Caco-2 (cell line): ENCODE measurements at regions of chr19 and their contacts with region 1.

Region 1: GRCh38 chr19:17390665-17391370 is 3.2 kb downstream of the CCDC194 start:
- DNase-seq: peak; percentile 93 to 95
- H3K4me3 ChIP-seq: peak overlapping the region; percentile 48
- H3K4me3 Mint-ChIP-seq: peak overlapping the region; percentile 78
- H3K27ac Mint-ChIP-seq: peak overlapping the region; percentile 32
- H3K4me1 ChIP-seq: 0 out of 2 replicates have a peak, but pooled peaks cover 5% of the 10 kb centered on the region
- H3K4me1 Mint-ChIP-seq: peaks cover 6% of the 10 kb centered on the region
- H3K27me3 ChIP-seq: no peaks in the 10 kb centered on the region
- H3K27me3 Mint-ChIP-seq: peaks cover 3% of the 10 kb centered on the region
- CTCF ChIP-seq: peak; percentile 62 to 68

Region 2: DNA sequence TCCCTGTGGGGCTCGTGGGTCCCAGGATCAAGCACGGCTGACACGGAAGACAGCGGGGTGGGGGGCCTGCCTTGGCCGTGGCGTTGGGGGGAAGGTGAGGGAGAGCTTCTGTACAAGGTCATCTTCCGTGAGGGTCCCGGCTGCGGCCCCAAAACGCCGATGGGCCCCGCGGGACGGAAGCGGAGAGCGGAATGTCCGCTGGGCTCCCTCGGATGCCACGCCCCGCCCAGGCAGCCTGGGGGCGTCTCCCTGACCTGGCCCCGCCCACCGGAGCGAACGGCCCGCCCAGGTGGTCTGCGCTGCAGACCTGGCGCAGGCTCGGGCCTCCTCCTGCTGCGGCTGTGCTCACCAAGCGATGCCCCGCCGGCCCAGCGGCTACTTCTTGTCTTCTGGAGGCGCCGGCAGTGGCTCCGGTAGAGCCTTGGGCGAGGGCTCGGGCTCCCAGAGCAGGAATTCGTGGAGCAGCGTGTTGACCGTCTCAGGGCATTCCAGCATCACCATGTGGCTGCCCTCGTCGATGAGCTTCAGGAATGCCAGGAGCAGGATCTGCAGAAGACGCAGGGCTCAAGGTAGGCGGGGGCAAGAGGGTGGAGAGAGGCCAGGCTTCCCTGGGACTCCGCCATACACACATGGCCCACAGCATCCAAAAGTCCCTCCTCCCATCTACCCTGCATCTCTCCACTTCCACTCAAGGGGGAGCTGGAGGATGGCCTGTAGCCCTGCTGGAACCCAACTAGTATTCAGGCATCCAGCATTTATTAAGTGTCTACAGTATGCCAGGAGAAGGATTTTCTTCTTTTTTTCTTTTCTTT is 98.3 kb before region 1 on chr19:
- CTCF ChIA-PET with region 1: interaction called, 3 read pairs
- POLR2A ChIA-PET with region 1: no interaction called
- intact Hi-C with region 1: loop called (anchors 2 kb)
- DNase-seq: peak; percentile 91 to 92
- H3K4me3 ChIP-seq: peak overlapping the region; percentile 70
- H3K4me3 Mint-ChIP-seq: peak overlapping the region; percentile 83
- H3K27ac Mint-ChIP-seq: peak overlapping the region; percentile 84
- H3K4me1 ChIP-seq: no peaks in the 10 kb centered on the region
- H3K4me1 Mint-ChIP-seq: no peaks in the 10 kb centered on the region
- H3K27me3 ChIP-seq: no peaks in the 10 kb centered on the region
- H3K27me3 Mint-ChIP-seq: no peaks in the 10 kb centered on the region
- CTCF ChIP-seq: peak; percentile 68 to 77

Region 3: GRCh38 chr19:17346109-17346671 is 44.6 kb before region 1 on chr19:
- CTCF ChIA-PET with region 1: no interaction called
- POLR2A ChIA-PET with region 1: no interaction called
- intact Hi-C with region 1: loop called (anchors 1 kb)
- DNase-seq: peak; percentile 65 to 83
- H3K4me3 ChIP-seq: no peak overlapping the region
- H3K4me3 Mint-ChIP-seq: no peak overlapping the region
- H3K27ac Mint-ChIP-seq: no peak overlapping the region
- H3K4me1 ChIP-seq: no peaks in the 10 kb centered on the region
- H3K4me1 Mint-ChIP-seq: no peaks in the 10 kb centered on the region
- H3K27me3 ChIP-seq: no peaks in the 10 kb centered on the region
- H3K27me3 Mint-ChIP-seq: peaks cover 6% of the 10 kb centered on the region
- CTCF ChIP-seq: peak; percentile 90 to 91